ENCODE measurements at regions of chr4 and their contacts with region 1.

Region 1: GRCh38 chr4:102868781-102869568 is at the start of gene CISD2:
- DNase-seq: peak; percentile 98
- total RNA-seq, gene CISD2: 15.3 to 22.5 TPM

Region 2: DNA sequence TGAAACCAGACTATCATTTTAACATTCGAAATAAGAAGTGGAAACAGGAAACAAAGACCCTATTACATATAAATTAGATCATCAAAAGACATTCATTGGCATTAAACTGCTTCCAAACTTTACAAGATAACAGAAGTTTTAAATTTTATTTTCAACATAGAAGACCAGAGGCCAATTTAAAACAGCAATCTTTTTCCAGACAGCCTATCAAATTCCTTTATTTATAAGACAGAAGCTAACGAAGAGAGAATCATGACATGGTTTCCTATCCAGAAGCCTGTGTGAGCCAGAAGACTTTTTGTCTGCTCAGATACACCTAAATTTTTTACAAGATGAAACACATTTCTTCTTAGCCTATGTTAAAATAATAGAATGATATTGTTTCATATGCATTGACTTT is 1813.6 kb before region 1 on chr4:
- intact Hi-C with region 1: no loop called
- DNase-seq: no peak

Region 3: GRCh38 chr4:102826890-102827673 is 41.9 kb before region 1 on chr4 and contains the start of gene UBE2D3:
- intact Hi-C with region 1: loop called in 1 of 2 experiments (anchors 5 kb)
- DNase-seq: peak; percentile 99
- total RNA-seq, gene UBE2D3: 216 to 257 TPM

Measured in posterior vena cava (tissue), 2 donors.